ENCODE measurements at regions of chr3 and their contacts with region 1.

Region 1: GRCh38 chr3:168040607-168041208 is 55.0 kb downstream of the GOLIM4 start:
- H3K4me3 Mint-ChIP-seq: no peak overlapping the region
- H3K27ac Mint-ChIP-seq: no peak overlapping the region
- H3K4me1 Mint-ChIP-seq: peaks cover 5% of the 10 kb centered on the region
- H3K27me3 Mint-ChIP-seq: no peaks in the 10 kb centered on the region

Region 2: DNA sequence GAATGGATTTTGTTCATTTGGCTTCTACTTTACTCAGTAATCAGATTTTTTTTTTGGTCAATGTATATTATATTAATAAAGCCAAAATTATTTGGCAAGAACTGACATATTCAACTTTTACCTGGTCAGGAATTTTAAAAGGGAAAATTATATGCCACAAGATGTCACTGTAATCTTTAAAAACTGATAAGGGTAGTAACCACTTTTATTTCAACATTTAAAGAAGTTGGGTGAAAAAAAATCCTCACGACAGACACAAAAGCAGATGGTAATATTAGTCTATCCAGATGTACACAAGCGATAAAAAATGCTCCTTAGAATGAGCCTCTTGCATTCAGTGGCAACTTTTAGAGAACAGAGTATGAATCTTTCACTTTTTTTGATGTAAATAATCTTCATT is 203.2 kb before region 1 on chr3:
- intact Hi-C with region 1: loop called (anchors 5 kb)
- H3K4me3 Mint-ChIP-seq: no peak overlapping the region
- H3K27ac Mint-ChIP-seq: peak overlapping the region; percentile 28
- H3K4me1 Mint-ChIP-seq: peaks cover 6% of the 10 kb centered on the region
- H3K27me3 Mint-ChIP-seq: no peaks in the 10 kb centered on the region

Region 3: DNA sequence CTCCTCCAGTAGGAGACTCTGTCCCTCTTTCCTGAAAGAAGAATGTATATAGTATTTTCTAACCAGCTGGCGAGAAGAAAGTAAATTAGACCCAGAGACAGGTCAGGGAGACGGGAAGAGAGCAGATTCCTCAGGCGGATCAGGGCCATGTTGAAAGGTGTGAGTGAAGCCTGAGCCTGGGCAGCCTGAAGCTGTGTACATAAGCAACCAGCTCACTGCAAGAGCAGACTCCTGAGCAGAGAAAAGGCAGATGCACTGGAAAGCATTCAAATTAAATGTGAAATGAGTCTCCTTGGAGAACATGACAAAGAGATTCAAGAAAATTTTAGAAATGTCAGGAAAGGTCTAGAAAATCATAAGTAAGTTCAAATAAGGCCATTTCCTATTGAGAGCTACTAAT is 110.7 kb before region 1 on chr3:
- intact Hi-C with region 1: loop called (anchors 1 kb)
- H3K4me3 Mint-ChIP-seq: no peak overlapping the region
- H3K27ac Mint-ChIP-seq: no peak overlapping the region
- H3K4me1 Mint-ChIP-seq: no peaks in the 10 kb centered on the region
- H3K27me3 Mint-ChIP-seq: peaks cover 9% of the 10 kb centered on the region

Measured in dendritic cell treated with granulocyte-macrophage colony-stimulating factor and Interleukin-4, amounts not matched to agents 40 ng/mL and 50 ng/mL, for 4 days (primary cell).